Common myeloid progenitor, CD34-positive (primary cell): ENCODE measurements at regions of chr6 and their contacts with region 1.

Region 1: DNA sequence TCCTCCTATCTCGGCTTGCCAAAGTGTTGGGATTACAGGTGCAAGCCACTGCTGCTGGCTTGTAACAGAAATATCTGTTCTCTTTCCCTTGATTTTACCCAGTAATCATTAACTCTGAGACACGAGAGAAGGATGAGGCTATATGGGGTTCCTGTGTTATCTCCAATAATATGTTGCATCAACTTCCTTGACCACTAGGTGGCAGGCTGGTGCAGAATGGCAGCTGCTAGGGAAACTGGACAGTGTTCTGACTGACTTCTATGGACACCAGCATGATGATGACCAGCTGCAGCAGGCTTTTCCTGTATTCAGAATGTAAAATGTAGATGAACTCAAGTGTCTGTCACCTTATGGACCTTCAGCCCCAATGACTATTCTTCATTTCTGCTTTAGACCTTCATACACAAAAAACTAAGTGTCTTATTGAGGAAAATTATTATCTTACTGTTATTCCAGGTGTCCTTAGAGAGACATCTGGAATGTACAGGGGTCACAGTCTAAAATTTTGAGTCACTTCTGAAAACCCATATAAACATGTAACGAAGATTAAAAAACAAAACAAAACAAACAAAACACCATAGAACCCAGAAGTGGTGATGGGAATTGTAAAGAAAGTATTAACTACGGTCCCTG is 20.4 kb upstream of the CD109 start:
- DNase-seq: peak; percentile 50 to 77 (median 68)
- H3K4me3 ChIP-seq: no peak overlapping the region
- H3K27ac ChIP-seq: no peak overlapping the region
- H3K4me1 ChIP-seq: peaks cover 0 to 8% (median 3%) of the 10 kb centered on the region in 4 experiments
- H3K27me3 ChIP-seq: no peaks in the 10 kb centered on the region

Region 2: GRCh38 chr6:73580247-73581149 is 95.1 kb before region 1 on chr6:
- CTCF ChIA-PET with region 1: no interaction called
- POLR2A ChIA-PET with region 1: no interaction called
- DNase-seq: peak; percentile 70 to 86 (median 76)
- H3K4me3 ChIP-seq: peak overlapping the region in 5 of 7 experiments; percentile 17 to 59 (median 54)
- H3K27ac ChIP-seq: peak overlapping the region; percentile 64 to 84
- H3K4me1 ChIP-seq: peaks cover 11 to 27% (median 24%) of the 10 kb centered on the region in 4 experiments
- H3K27me3 ChIP-seq: no peaks in the 10 kb centered on the region

Region 3: DNA sequence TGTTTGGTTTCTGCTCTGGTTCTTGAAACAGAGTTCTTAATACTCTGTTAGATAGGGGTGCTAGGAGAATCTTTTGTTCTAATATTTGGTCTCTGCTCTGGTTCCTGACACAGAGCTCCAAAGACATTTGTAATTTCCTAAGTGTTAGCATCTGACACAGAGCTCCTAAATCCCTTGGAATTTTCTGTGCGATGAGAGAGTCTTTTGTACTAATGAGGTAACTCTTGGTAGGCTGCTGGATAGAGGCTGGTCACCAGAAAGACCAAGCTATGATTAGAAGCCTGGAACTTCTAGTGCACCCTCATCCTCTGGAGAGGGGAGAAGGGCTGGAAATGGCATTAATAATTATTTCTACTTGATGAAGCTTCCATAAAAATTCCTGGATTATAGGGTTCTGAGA is 12.8 kb after region 1 on chr6:
- CTCF ChIA-PET with region 1: interaction called, 22 read pairs
- POLR2A ChIA-PET with region 1: no interaction called
- DNase-seq: no peak
- H3K4me3 ChIP-seq: no peak overlapping the region
- H3K27ac ChIP-seq: no peak overlapping the region
- H3K4me1 ChIP-seq: peaks cover 0 to 5% (median 2%) of the 10 kb centered on the region in 4 experiments
- H3K27me3 ChIP-seq: no peaks in the 10 kb centered on the region

Region 4: DNA sequence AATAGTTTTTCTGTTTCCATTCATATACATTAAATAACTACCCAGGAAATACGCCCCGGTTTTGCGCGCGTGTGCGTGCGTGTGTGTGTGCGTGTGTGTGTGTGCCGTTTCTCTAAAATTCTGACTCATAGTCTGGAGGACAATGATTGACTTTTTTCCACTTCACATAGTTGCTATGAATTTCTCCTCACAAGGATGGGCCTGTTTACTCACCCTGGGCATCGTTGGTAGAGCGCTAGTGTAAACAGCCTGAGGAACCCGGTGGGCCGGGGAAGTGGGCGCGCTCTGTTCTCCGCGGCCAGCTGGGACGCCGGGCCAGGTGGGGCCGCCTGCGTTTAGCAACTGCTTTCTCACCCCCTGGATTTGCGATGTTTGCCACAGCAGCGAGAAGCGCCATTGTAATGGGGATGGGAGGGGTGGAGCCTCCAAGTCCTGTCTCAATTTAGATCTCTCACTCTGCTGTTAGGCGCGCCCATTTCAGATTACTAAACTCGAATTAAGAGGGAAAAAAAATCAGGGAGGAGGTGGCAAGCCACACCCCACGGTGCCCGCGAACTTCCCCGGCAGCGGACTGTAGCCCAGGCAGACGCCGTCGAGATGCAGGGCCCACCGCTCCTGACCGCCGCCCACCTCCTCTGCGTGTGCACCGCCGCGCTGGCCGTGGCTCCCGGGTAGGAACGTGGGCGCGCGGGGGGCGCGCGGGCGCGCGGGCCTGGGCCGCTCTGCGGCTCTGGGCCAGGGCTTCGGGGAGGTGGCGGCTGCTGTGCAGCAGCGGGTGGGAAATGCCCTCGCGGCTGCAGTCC is 20.2 kb after region 1 on chr6 and contains the start of gene CD109:
- CTCF ChIA-PET with region 1: interaction called, 22 read pairs
- POLR2A ChIA-PET with region 1: no interaction called
- DNase-seq: peak; percentile 87 to 97 (median 96)
- H3K4me3 ChIP-seq: peak within 1 kb of the TSS; percentile 73 to 97 (median 85)
- H3K27ac ChIP-seq: peak within 1 kb of the TSS; percentile 86 to 94
- H3K4me1 ChIP-seq: peaks cover 31 to 52% (median 45%) of the 10 kb centered on the region in 4 experiments
- H3K27me3 ChIP-seq: no peaks in the 10 kb centered on the region

Region 5: GRCh38 chr6:73704260-73704659 is 28.7 kb after region 1 on chr6:
- CTCF ChIA-PET with region 1: interaction called, 10 read pairs
- POLR2A ChIA-PET with region 1: interaction called, 4 read pairs
- DNase-seq: no peak
- H3K4me3 ChIP-seq: no peak overlapping the region
- H3K27ac ChIP-seq: peak overlapping the region in 1 of 2 experiments; percentile 34
- H3K4me1 ChIP-seq: peaks cover 5 to 16% (median 8%) of the 10 kb centered on the region in 4 experiments
- H3K27me3 ChIP-seq: no peaks in the 10 kb centered on the region

Region 6: GRCh38 chr6:73732845-73733675 is 57.5 kb after region 1 on chr6:
- CTCF ChIA-PET with region 1: interaction called, 248 read pairs
- POLR2A ChIA-PET with region 1: interaction called, 6 read pairs
- DNase-seq: peak; percentile 74 to 89 (median 85)
- H3K4me3 ChIP-seq: no peak overlapping the region
- H3K27ac ChIP-seq: no peak overlapping the region
- H3K4me1 ChIP-seq: peaks cover 2 to 18% (median 13%) of the 10 kb centered on the region in 4 experiments
- H3K27me3 ChIP-seq: no peaks in the 10 kb centered on the region

Region 7: DNA sequence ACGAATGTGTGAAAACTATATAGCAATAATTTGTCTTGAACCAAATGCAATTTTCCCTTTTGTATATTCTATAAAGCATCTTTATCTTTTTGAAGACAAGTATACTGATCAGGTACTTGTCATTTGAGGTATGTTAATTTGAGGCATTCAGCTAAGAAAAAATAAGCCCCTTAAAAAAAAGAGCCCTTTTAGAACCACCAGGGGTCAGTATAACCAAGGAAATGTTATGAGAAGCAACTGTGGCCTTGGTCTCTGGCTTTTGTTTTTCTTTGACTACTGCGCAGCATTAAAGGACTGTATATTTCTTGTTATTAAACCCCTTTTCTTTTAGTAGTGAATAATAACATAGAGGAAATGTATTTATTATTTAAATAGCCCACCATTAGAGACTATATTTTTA is 63.5 kb after region 1 on chr6:
- CTCF ChIA-PET with region 1: interaction called, 248 read pairs
- POLR2A ChIA-PET with region 1: no interaction called
- DNase-seq: peak; percentile 71 to 86 (median 77)
- H3K4me3 ChIP-seq: no peak overlapping the region
- H3K27ac ChIP-seq: no peak overlapping the region
- H3K4me1 ChIP-seq: peaks cover 0 to 5% (median 0%) of the 10 kb centered on the region in 4 experiments
- H3K27me3 ChIP-seq: no peaks in the 10 kb centered on the region